ENCODE measurements at regions of chr7 and their contacts with region 1.

Region 1: DNA sequence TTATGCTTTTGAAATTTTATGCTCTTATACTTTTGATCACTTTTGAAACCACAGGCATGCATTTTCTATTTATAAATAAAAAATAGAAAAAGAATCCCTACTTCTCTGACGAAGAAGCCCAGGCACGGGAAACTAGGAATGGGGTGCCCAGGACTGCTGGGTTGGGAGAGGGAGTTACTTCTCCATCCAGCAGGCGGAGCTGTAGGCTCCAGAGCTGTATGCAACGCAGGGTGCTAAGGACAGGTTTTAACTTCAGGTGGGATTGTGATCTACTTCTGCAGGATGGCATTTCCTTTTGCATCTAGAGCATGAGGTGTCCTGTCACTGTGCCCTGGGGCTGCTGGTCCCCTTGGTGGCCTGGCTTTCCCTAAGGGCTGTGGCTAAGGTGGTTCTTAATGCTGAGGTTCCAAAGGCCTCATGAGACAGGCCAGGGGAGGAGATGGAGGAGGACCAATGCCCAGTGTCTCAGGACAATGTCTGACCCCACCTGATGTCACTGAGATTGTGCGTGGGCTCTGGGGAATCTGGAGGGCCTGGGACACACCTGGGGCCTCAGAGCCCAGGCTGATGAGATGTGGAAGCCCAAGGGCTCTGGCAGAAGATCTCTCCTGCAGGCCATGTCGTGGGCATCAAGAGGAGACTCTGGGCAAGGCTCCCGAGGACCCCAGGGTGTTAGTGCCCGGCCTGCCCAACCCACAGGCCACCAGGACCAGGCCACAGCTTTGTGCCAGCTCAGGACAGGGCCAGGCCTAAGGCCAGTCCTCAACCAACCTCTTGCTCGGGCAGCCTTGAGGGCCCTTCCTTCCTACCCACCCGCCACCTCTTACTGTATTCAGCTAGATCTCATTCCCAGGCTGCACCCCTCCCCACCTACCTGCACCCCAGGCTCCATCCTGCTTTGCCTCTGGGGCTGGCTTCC is 507 bp downstream of the CCDC201 start:
- DNase-seq: no peak
- CTCF ChIP-seq: peak; percentile 64

Region 2: GRCh38 chr7:45160417-45160881 is 711.9 kb before region 1 on chr7:
- in situ Hi-C with region 1: loop called (anchors 25 kb)
- DNase-seq: no peak
- CTCF ChIP-seq: no peak

Region 3: DNA sequence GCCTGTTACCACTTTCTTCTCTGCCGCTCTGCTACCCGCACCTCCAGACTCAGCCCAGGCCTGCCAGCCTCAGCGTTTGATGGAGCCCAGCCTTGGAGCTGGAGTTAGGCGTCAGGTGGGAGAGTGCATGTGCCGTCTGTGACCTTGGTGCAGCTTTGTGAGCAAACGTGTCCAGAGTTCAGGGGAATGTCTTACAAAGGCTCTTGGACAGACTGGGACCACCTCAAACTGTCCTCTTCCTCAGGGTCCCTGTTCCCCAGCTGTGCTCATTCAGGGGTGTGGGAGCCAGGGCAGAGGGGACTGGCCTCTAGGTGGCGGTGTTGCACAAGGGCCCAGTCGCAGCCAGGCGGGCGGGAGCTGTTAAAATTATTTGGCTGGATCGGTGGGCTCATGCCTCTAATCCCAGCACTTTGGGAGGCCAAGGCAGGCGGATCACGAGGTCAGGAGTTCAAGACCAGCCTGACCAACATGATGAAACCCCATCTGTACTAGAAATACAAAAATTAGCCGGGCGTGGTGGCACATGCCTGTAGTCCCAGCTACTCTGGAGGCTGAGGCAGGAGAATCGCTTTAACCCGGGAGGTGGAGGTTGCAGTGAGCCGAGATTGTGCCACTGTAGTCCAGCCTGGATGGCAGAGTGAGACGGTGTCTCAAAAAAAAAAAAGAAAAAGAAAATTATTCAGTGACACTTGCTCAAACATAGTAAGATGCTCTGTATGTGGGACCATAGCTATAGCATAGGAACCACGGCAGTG is 209.0 kb before region 1 on chr7:
- in situ Hi-C with region 1: loop called (anchors 25 kb)
- DNase-seq: peak; percentile 45
- CTCF ChIP-seq: peak; percentile 92

Region 4: DNA sequence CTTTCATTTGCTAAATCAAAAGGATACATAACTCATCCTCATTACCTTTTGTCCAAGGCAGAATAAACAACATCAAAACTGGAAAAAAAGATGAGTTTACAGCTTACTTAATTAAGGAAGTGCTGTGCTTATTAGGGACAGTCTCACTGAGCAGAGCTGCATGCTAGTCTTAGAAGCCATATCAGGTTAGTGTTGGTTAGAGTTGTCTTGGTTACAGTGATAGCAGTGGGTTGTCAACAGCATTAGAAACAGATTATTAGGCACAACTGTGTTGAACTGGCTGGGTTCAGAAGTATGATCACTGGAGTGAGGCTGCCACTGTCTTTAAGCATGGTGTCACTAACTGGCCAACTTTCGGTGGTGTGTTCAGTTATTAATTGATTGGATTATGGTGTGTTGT is 552.6 kb after region 1 on chr7:
- in situ Hi-C with region 1: no loop called
- DNase-seq: no peak
- CTCF ChIP-seq: no peak